Activated naive CD4-positive, alpha-beta T cell treated with anti-CD3 and anti-CD28 coated beads, Interleukin-2, amount 10 ng/mL, durations not matched to agents 7 days and 5 days (primary cell): ENCODE measurements at regions of chr10 and their contacts with region 1.

Region 1: DNA sequence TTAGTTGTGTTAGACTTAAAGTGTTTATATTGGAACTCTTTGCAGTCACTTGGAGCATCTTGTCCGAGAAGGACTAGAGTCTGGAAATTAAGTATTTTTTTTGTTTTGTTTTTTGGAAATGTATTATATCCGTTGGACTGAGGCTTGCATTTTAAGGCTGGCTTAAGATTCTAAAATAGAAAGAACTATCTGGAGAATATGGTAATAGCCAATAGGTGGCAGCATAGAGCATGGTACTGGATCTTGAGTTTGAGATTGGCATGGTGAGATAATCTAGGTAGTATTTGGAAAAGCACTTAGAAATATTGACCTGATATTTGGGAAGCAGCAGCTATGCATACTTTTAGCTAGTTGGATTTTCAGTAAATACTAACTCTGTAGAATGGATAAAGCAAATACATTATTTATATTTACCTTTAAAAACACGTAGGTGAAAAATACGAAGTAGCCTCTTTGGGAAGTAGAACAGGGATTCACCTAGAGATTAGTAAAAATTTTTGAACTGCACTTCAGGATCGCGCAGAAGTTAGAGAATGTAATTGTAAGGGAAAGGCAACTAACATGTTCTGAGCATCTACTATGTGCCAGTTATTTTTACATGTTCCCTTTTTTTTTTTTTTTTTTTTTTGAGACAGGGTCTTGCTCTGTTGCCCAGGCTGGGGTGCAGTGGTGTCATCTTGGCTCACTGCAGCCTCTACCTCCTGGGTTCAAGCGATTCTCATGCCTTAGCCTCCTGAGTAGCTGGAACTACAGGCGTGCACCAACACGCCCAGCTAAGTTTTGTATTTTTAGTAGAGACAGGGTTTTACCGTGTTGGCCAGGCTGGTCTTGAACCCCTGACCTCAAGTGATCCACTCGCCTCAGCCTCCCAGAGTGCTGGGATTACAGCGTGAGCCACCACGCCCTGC is 78.6 kb downstream of the LCOR start:
- DNase-seq: no peak
- H3K4me3 Mint-ChIP-seq: no peak overlapping the region
- H3K27ac Mint-ChIP-seq: no peak overlapping the region
- H3K4me1 Mint-ChIP-seq: peaks cover 7% of the 10 kb centered on the region
- H3K27me3 Mint-ChIP-seq: no peaks in the 10 kb centered on the region

Region 2: GRCh38 chr10:96803318-96803664 is 107.5 kb before region 1 on chr10:
- CTCF ChIA-PET with region 1: no interaction called
- DNase-seq: no peak
- H3K4me3 Mint-ChIP-seq: no peak overlapping the region
- H3K27ac Mint-ChIP-seq: no peak overlapping the region
- H3K4me1 Mint-ChIP-seq: no peaks in the 10 kb centered on the region
- H3K27me3 Mint-ChIP-seq: peaks cover 19% of the 10 kb centered on the region

Region 3: GRCh38 chr10:96930469-96930868 is 19.7 kb after region 1 on chr10:
- CTCF ChIA-PET with region 1: interaction called, 10 read pairs
- DNase-seq: no peak
- H3K4me3 Mint-ChIP-seq: no peak overlapping the region
- H3K27ac Mint-ChIP-seq: no peak overlapping the region
- H3K4me1 Mint-ChIP-seq: no peaks in the 10 kb centered on the region
- H3K27me3 Mint-ChIP-seq: no peaks in the 10 kb centered on the region

Region 4: DNA sequence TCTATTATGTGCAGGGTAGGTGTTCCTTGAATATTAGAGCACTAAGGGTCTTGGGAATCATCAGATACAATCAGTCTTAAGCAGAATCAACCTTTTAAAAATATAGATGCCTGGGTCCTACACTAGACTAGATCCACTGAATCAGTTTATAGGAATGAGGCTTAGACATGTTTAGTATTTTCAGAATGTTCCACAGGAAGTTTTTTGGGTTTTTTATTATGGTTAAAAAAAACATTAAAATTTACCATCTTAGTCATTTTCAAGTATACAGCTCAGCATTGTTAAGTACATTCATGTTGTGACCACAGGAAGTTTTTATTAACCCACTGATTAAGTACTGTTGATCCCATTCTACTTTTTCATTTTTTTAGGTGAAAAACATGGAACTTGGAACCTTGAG is 57.1 kb after region 1 on chr10:
- CTCF ChIA-PET with region 1: no interaction called
- DNase-seq: no peak
- H3K4me3 Mint-ChIP-seq: no peak overlapping the region
- H3K27ac Mint-ChIP-seq: no peak overlapping the region
- H3K4me1 Mint-ChIP-seq: no peaks in the 10 kb centered on the region
- H3K27me3 Mint-ChIP-seq: no peaks in the 10 kb centered on the region